A673 (cell line): ENCODE measurements at regions of chr13 and their contacts with region 1.

Region 1: DNA sequence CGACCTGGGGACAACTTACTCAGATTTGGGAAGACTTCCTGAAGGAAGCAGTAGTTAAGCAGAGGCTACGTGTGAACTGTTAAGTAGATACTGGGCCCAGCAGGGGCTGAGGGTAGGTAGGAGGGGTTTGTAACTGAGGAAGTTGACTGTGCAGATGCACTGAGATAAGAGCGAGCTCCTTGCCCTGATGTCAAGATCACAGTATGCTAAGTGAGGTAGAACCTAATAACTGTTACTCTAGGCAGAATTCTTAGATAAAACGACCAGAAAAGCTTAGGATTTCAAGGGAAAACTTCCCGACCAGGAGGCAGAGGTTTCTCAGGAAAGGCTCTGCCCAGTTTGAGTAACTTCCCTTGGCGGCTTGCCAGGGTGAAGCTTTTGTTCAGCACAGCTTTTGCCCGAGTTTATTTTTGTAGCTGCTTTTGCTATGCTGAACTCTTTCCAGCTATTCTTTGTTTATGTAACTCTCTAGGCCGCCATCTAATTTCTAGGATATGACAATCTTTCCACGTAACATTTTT is 632.1 kb downstream of the DIAPH3 start:
- DNase-seq: peak; percentile 91
- H3K4me3 ChIP-seq: no peak overlapping the region
- H3K27ac ChIP-seq: peak overlapping the region; percentile 61
- H3K4me1 ChIP-seq: peaks cover 56% of the 10 kb centered on the region
- H3K27me3 ChIP-seq: no peaks in the 10 kb centered on the region
- CTCF ChIP-seq: no peak

Region 2: DNA sequence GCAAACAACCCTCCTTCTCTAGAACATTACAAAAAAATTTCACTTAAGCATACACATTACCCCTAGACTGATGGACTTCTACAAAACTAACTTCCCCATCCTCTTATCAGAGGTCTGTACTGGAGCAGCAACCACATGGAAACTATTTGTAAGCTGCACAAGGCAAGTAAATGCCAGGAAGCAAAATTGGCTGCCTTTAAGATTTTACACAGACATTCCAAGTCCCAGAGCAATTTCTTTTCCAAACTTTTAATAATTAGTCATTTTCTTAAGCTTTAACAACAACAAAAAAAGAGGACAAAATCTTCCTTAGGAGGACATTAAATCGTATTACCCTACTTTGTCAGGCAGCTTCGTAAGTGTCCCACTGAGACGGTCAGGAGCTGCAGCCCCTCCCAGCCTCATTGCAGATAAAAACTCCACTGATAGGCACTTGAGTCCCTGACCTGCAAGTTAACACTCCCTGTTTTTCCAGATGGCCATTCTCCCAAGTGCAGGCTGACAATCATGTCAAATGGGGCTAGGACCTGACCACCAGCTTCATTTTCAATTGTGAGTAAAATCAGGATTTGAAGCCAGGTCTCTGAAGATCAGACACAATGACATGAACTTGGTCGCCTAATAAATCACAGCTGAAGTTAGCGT is 48.0 kb before region 1 on chr13:
- CTCF ChIA-PET with region 1: no interaction called
- POLR2A ChIA-PET with region 1: no interaction called
- intact Hi-C with region 1: loop called (anchors 5 kb)
- DNase-seq: no peak
- H3K4me3 ChIP-seq: no peak overlapping the region
- H3K27ac ChIP-seq: no peak overlapping the region
- H3K4me1 ChIP-seq: peaks cover 50% of the 10 kb centered on the region
- H3K27me3 ChIP-seq: no peaks in the 10 kb centered on the region
- CTCF ChIP-seq: no peak